CD4-positive, alpha-beta T cell (primary cell): ENCODE measurements at regions of chr19 and their contacts with region 1.

Region 1: GRCh38 chr19:4089400-4089908 is 22.8 kb upstream of the ZBTB7A start:
- DNase-seq: peak in 9 of 14 experiments; percentile 25 to 81 (median 48)
- ATAC-seq: peak; percentile 47
- H3K4me3 ChIP-seq: peak overlapping the region; percentile 34
- H3K4me3 Mint-ChIP-seq: peak overlapping the region; percentile 80
- H3K27ac ChIP-seq: peak overlapping the region; percentile 52 to 77
- H3K27ac Mint-ChIP-seq: peak overlapping the region; percentile 95
- H3K4me1 ChIP-seq: peaks cover 57% of the 10 kb centered on the region
- H3K4me1 Mint-ChIP-seq: peaks cover 40% of the 10 kb centered on the region
- H3K27me3 ChIP-seq: no peaks in the 10 kb centered on the region
- H3K27me3 Mint-ChIP-seq: no peaks in the 10 kb centered on the region
- CTCF ChIP-seq: no peak

Region 2: DNA sequence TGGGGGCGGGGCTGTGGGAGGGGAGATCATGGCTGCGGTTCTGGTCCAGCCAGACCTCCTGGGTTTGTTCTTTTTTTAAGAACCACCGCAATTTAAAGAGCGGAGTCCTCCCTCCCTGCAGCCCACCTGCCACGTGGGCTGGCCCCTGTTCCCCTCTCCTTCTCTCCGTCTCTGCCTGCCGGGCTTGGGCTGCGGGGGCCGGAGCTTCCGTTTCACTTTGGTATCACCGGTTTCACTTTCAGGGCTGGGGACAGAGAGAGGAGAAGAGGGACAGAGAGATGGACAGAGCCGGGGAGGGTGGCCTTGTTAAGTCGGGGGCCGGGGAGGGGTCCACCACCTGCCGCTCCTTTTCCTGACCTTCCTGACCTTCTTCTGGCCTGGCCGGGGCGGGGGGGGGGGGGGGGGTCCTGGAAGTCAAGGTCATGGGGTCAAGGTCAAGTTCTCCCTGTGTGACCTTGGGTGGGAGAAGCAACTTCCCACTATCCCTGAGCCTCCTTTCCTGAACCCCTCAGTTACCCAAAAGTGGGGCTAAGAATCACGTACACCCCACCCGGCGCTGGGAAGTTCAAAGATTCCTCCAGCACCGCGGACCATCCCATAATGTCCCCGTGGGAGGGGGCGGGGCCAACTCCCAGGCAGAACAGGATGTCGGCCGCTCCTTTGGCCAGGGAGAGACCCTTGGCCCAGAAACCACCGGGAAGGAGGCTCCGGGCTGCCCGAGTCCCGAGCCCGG is 11.4 kb before region 1 on chr19:
- CTCF ChIA-PET with region 1: no interaction called
- POLR2A ChIA-PET with region 1: interaction called, 13 read pairs
- intact Hi-C with region 1: no loop called
- DNase-seq: peak in 8 of 14 experiments; percentile 35 to 75 (median 58)
- ATAC-seq: peak; percentile 80
- H3K4me3 ChIP-seq: peak overlapping the region; percentile 79
- H3K4me3 Mint-ChIP-seq: peak overlapping the region; percentile 88
- H3K27ac ChIP-seq: peak overlapping the region; percentile 51 to 59
- H3K27ac Mint-ChIP-seq: peak overlapping the region; percentile 83
- H3K4me1 ChIP-seq: peaks cover 52% of the 10 kb centered on the region
- H3K4me1 Mint-ChIP-seq: peaks cover 31% of the 10 kb centered on the region
- H3K27me3 ChIP-seq: no peaks in the 10 kb centered on the region
- H3K27me3 Mint-ChIP-seq: no peaks in the 10 kb centered on the region
- CTCF ChIP-seq: no peak

Region 3: GRCh38 chr19:4103073-4103418 is 13.6 kb after region 1 on chr19:
- CTCF ChIA-PET with region 1: interaction called, 3 read pairs
- POLR2A ChIA-PET with region 1: interaction called, 68 read pairs
- intact Hi-C with region 1: loop called (anchors 2 kb)
- DNase-seq: peak in 1 of 14 experiments; percentile 13
- ATAC-seq: no peak
- H3K4me3 ChIP-seq: no peak overlapping the region
- H3K4me3 Mint-ChIP-seq: no peak overlapping the region
- H3K27ac ChIP-seq: no peak overlapping the region
- H3K27ac Mint-ChIP-seq: no peak overlapping the region
- H3K4me1 ChIP-seq: peaks cover 53% of the 10 kb centered on the region
- H3K4me1 Mint-ChIP-seq: peaks cover 29% of the 10 kb centered on the region
- H3K27me3 ChIP-seq: no peaks in the 10 kb centered on the region
- H3K27me3 Mint-ChIP-seq: no peaks in the 10 kb centered on the region
- CTCF ChIP-seq: no peak

Region 4: GRCh38 chr19:4108767-4109625 is 19.5 kb after region 1 on chr19:
- CTCF ChIA-PET with region 1: interaction called, 3 read pairs
- POLR2A ChIA-PET with region 1: interaction called, 68 read pairs
- intact Hi-C with region 1: loop called (anchors 2 kb)
- DNase-seq: peak; percentile 39 to 92 (median 76)
- ATAC-seq: peak; percentile 59
- H3K4me3 ChIP-seq: peak overlapping the region; percentile 16
- H3K4me3 Mint-ChIP-seq: peak overlapping the region; percentile 68
- H3K27ac ChIP-seq: peak overlapping the region; percentile 53 to 75
- H3K27ac Mint-ChIP-seq: peak overlapping the region; percentile 96
- H3K4me1 ChIP-seq: peaks cover 75% of the 10 kb centered on the region
- H3K4me1 Mint-ChIP-seq: peaks cover 46% of the 10 kb centered on the region
- H3K27me3 ChIP-seq: no peaks in the 10 kb centered on the region
- H3K27me3 Mint-ChIP-seq: no peaks in the 10 kb centered on the region
- CTCF ChIP-seq: no peak

Region 5: GRCh38 chr19:4123615-4124568 is 34.4 kb after region 1 on chr19 and contains the start of gene MAP2K2:
- CTCF ChIA-PET with region 1: no interaction called
- POLR2A ChIA-PET with region 1: interaction called, 3 read pairs
- intact Hi-C with region 1: loop called in 1 of 2 experiments (anchors 5 kb)
- DNase-seq: peak; percentile 92 to 99 (median 96)
- ATAC-seq: peak; percentile 97
- H3K4me3 ChIP-seq: peak within 1 kb of the TSS; percentile 59
- H3K4me3 Mint-ChIP-seq: peak within 1 kb of the TSS; percentile 93
- H3K27ac ChIP-seq: peak within 1 kb of the TSS; percentile 44 to 53
- H3K27ac Mint-ChIP-seq: peak within 1 kb of the TSS; percentile 89
- H3K4me1 ChIP-seq: peaks cover 32% of the 10 kb centered on the region
- H3K4me1 Mint-ChIP-seq: peaks cover 26% of the 10 kb centered on the region
- H3K27me3 ChIP-seq: no peaks in the 10 kb centered on the region
- H3K27me3 Mint-ChIP-seq: no peaks in the 10 kb centered on the region
- CTCF ChIP-seq: no peak
- total RNA-seq, gene MAP2K2: 72.7 to 77.6 TPM